ENCODE measurements at regions of chr2 and their contacts with region 1.

Region 1: GRCh38 chr2:65116645-65117044 is 13.3 kb downstream of the RAB1A start:
- DNase-seq: no peak
- H3K4me3 Mint-ChIP-seq: no peak overlapping the region
- H3K27ac Mint-ChIP-seq: no peak overlapping the region
- H3K4me1 Mint-ChIP-seq: peaks cover 33% of the 10 kb centered on the region
- H3K27me3 Mint-ChIP-seq: no peaks in the 10 kb centered on the region

Region 2: GRCh38 chr2:65129826-65130663 is 13.4 kb after region 1 on chr2 and contains the start of gene RAB1A:
- CTCF ChIA-PET with region 1: interaction called, 17 read pairs
- POLR2A ChIA-PET with region 1: interaction called, 3 read pairs
- DNase-seq: peak; percentile 100
- H3K4me3 Mint-ChIP-seq: peak within 1 kb of the TSS; percentile 96
- H3K27ac Mint-ChIP-seq: peak within 1 kb of the TSS; percentile 98
- H3K4me1 Mint-ChIP-seq: peaks cover 33% of the 10 kb centered on the region
- H3K27me3 Mint-ChIP-seq: peaks cover 2% of the 10 kb centered on the region
- total RNA-seq, gene RAB1A: 56.0 to 63.5 TPM